HEK293 (cell line): ENCODE measurements at regions of chr3 and their contacts with region 1.

Region 1: GRCh38 chr3:32177702-32178198 is 60.7 kb upstream of the CMTM8 start:
- H3K4me3 ChIP-seq: no peak overlapping the region
- H3K27ac ChIP-seq: no peak overlapping the region
- H3K4me1 ChIP-seq: no peaks in the 10 kb centered on the region
- CTCF ChIP-seq: peak; percentile 61

Region 2: DNA sequence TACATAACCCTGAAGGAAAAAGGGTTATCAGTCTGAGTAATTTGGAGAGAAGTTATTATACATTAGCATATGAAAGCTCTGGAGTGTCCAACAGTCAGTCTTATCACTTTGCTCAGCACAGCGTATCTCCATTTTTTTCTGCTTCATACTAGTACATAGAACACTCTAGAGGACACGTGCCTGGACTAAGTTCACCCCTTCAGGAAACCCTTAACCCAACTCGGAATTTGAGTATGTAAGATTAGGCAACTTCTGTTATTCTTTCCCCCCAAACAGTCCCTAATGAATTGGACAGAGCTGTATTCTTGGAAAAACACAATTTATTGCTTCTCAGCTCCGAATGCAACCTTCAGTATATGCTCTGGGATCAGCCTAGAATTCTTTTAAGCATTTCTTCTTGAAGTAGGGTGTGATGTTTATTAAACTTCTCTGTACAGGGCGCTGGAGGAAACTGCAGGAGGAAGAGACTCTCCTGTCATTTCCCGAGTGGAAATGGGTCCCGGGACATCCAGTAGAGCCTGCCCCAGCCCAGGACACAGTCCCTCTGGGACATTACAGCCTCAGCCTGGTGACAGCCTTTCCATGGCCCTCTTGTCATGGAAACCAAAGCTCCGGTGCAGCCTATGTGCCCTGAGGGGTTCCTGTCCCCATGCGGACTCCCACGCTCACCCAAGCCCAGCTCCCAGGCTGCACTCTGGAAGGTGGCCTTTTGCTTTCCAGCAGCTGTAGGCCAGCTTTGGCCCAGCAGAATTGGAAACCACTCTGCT is 23.4 kb after region 1 on chr3:
- CTCF ChIA-PET with region 1: interaction called, 11 read pairs
- POLR2A ChIA-PET with region 1: no interaction called
- H3K4me3 ChIP-seq: no peak overlapping the region
- H3K27ac ChIP-seq: no peak overlapping the region
- H3K4me1 ChIP-seq: no peaks in the 10 kb centered on the region
- CTCF ChIP-seq: no peak

Region 3: GRCh38 chr3:32285891-32286290 is 108.1 kb after region 1 on chr3:
- CTCF ChIA-PET with region 1: no interaction called
- POLR2A ChIA-PET with region 1: no interaction called
- H3K4me3 ChIP-seq: no peak overlapping the region
- H3K27ac ChIP-seq: no peak overlapping the region
- H3K4me1 ChIP-seq: no peaks in the 10 kb centered on the region
- CTCF ChIP-seq: no peak